Activated CD4-positive, alpha-beta memory T cell treated with anti-CD3 and anti-CD28 coated beads for 36 hours (primary cell): ENCODE measurements at regions of chr3 and their contacts with region 1.

Region 1: DNA sequence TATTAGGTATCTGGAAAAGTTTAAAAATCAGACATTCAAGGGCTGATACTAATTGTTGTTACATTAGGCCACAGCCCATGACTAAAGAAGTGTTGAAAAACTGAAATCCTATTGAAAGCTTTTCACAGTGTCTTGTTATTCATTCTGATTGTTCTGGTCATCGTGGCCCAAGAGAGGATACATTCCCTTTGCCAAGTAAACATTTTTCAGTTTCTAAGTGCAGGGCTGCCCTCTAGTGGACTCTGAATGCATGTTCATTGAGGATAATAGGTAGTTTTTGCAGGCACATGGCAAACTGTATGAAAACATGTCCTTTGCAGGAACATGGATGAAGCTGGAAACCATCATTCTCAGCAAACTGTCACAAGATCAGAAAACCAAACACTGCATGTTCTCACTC is 181.1 kb downstream of the MYRIP start:
- DNase-seq: peak; percentile 14
- H3K4me3 Mint-ChIP-seq: no peak overlapping the region
- H3K27ac Mint-ChIP-seq: no peak overlapping the region
- H3K4me1 Mint-ChIP-seq: no peaks in the 10 kb centered on the region
- H3K27me3 Mint-ChIP-seq: peaks cover 2% of the 10 kb centered on the region

Region 2: GRCh38 chr3:39414421-39414907 is 576.1 kb before region 1 on chr3:
- CTCF ChIA-PET with region 1: no interaction called
- POLR2A ChIA-PET with region 1: no interaction called
- intact Hi-C with region 1: loop called (anchors 2 kb)
- DNase-seq: no peak
- H3K4me3 Mint-ChIP-seq: no peak overlapping the region
- H3K27ac Mint-ChIP-seq: peak overlapping the region; percentile 3
- H3K4me1 Mint-ChIP-seq: peaks cover 27% of the 10 kb centered on the region
- H3K27me3 Mint-ChIP-seq: no peaks in the 10 kb centered on the region

Region 3: DNA sequence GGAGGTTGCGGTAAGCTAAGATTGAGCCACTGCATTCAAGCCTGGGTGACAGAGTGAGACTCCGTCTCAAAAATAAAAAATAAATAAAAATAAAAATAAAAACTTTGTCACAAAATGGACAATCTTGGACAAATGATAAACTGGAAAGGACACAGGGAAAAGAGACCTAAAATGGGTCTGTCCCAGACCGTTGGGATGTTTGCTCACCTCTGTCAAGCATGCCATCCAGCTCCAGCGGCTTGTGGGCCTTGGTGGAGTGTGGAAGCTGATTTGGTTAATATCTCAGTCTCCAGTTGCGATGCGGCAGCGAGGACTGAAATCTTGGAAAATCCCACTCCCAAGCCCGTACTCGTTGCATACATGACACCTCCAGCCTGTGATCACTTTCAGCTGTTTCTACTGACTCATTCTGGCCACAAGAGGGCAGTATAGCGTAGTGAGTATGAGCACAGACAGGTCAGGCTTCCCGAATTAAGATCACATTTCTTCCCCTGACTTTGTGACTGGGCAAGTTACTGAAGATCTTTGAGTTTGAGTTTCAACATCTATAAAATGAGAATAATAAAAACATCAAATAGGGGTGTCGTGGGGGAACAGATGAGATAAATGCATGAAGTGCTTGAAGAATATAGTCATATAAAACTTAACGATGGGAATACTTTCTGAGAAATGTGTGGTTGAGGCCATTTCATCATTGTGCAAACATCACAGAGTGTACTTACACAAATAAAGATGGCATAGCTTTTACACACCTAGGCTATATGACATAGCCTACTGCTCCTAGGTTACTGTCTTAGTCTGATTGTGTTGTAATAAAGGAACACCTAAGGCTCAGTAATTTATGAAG is 542.7 kb before region 1 on chr3:
- CTCF ChIA-PET with region 1: no interaction called
- POLR2A ChIA-PET with region 1: no interaction called
- intact Hi-C with region 1: no loop called
- DNase-seq: peak; percentile 59
- H3K4me3 Mint-ChIP-seq: no peak overlapping the region
- H3K27ac Mint-ChIP-seq: no peak overlapping the region
- H3K4me1 Mint-ChIP-seq: peaks cover 4% of the 10 kb centered on the region
- H3K27me3 Mint-ChIP-seq: peaks cover 2% of the 10 kb centered on the region

Region 4: GRCh38 chr3:39639344-39640236 is 350.9 kb before region 1 on chr3:
- CTCF ChIA-PET with region 1: no interaction called
- POLR2A ChIA-PET with region 1: no interaction called
- intact Hi-C with region 1: loop called (anchors 5 kb)
- DNase-seq: peak; percentile 44
- H3K4me3 Mint-ChIP-seq: no peak overlapping the region
- H3K27ac Mint-ChIP-seq: no peak overlapping the region
- H3K4me1 Mint-ChIP-seq: peaks cover 10% of the 10 kb centered on the region
- H3K27me3 Mint-ChIP-seq: peaks cover 9% of the 10 kb centered on the region

Region 5: GRCh38 chr3:40398346-40398745 is 407.8 kb after region 1 on chr3:
- CTCF ChIA-PET with region 1: no interaction called
- POLR2A ChIA-PET with region 1: no interaction called
- intact Hi-C with region 1: no loop called
- DNase-seq: no peak
- H3K4me3 Mint-ChIP-seq: no peak overlapping the region
- H3K27ac Mint-ChIP-seq: no peak overlapping the region
- H3K4me1 Mint-ChIP-seq: no peaks in the 10 kb centered on the region
- H3K27me3 Mint-ChIP-seq: no peaks in the 10 kb centered on the region